MCF 10A (cell line): ENCODE measurements at regions of chr16 and their contacts with region 1.

Region 1: DNA sequence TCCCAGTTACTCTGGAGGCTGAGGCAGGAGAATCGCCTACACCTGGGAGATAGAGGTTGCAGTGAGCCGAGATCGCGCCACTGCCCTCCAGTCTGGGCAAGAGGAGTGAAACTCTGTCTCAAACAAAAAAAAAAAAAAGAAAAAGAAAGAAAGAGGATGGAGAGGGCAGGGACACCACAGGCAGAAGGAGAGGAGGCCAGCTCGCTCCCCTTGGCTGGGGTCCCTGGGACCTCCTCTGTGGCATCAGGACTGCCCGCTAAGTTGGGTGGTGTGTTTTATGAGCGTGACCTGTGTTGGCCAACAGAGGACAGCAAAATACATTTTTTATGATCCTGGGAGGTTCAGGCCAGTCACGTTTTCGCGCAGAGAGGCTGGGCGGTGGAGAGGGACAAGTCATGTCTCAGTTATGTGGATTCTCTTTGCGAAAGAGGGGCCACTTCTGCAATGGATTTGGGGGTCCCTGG is 229.6 kb downstream of the MRTFB start:
- DNase-seq: peak; percentile 85
- H3K4me3 Mint-ChIP-seq: peak overlapping the region; percentile 81
- H3K27ac Mint-ChIP-seq: peak overlapping the region; percentile 71
- H3K4me1 Mint-ChIP-seq: peaks cover 22% of the 10 kb centered on the region
- H3K27me3 Mint-ChIP-seq: no peaks in the 10 kb centered on the region
- CTCF ChIP-seq: peak; percentile 76

Region 2: DNA sequence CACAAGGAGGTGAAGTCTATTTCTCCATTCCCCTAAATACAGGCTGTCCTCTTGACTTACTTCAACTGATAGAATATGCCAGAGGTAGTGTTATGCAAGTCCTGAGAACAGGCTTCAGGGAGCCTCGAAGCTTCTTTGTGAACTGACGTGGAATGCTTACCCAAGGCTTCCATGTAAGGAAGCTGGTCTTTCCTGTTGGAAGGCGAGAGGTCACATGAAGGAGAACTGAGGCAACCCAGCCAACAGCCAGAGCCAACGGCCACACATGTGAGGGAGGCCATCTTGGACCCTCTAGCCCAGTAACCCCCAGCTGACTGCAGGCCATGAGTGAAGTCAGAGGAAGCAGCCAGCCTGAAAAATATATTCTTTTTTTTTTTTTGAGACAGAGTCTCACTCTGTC is 38.3 kb after region 1 on chr16:
- CTCF ChIA-PET with region 1: no interaction called
- POLR2A ChIA-PET with region 1: no interaction called
- intact Hi-C with region 1: no loop called
- DNase-seq: no peak
- H3K4me3 Mint-ChIP-seq: no peak overlapping the region
- H3K27ac Mint-ChIP-seq: no peak overlapping the region
- H3K4me1 Mint-ChIP-seq: no peaks in the 10 kb centered on the region
- H3K27me3 Mint-ChIP-seq: no peaks in the 10 kb centered on the region
- CTCF ChIP-seq: no peak

Region 3: GRCh38 chr16:14364386-14365204 is 63.9 kb after region 1 on chr16:
- CTCF ChIA-PET with region 1: interaction called, 3 read pairs
- POLR2A ChIA-PET with region 1: no interaction called
- intact Hi-C with region 1: loop called (anchors 2 kb)
- DNase-seq: peak; percentile 68
- H3K4me3 Mint-ChIP-seq: peak overlapping the region; percentile 63
- H3K27ac Mint-ChIP-seq: no peak overlapping the region
- H3K4me1 Mint-ChIP-seq: peaks cover 22% of the 10 kb centered on the region
- H3K27me3 Mint-ChIP-seq: no peaks in the 10 kb centered on the region
- CTCF ChIP-seq: no peak

Region 4: GRCh38 chr16:14449790-14450480 is 149.2 kb after region 1 on chr16:
- CTCF ChIA-PET with region 1: interaction called, 13 read pairs
- POLR2A ChIA-PET with region 1: interaction called, 3 read pairs
- intact Hi-C with region 1: no loop called
- DNase-seq: peak; percentile 57
- H3K4me3 Mint-ChIP-seq: no peak overlapping the region
- H3K27ac Mint-ChIP-seq: peak overlapping the region; percentile 56
- H3K4me1 Mint-ChIP-seq: peaks cover 23% of the 10 kb centered on the region
- H3K27me3 Mint-ChIP-seq: no peaks in the 10 kb centered on the region
- CTCF ChIP-seq: no peak

Region 5: GRCh38 chr16:14501331-14502255 is 200.9 kb after region 1 on chr16:
- CTCF ChIA-PET with region 1: interaction called, 22 read pairs
- POLR2A ChIA-PET with region 1: interaction called, 8 read pairs
- intact Hi-C with region 1: no loop called
- DNase-seq: peak; percentile 96
- H3K4me3 Mint-ChIP-seq: peak overlapping the region; percentile 57
- H3K27ac Mint-ChIP-seq: peak overlapping the region; percentile 78
- H3K4me1 Mint-ChIP-seq: peaks cover 56% of the 10 kb centered on the region
- H3K27me3 Mint-ChIP-seq: no peaks in the 10 kb centered on the region
- CTCF ChIP-seq: no peak

Region 6: GRCh38 chr16:14600164-14600563 is 299.4 kb after region 1 on chr16:
- CTCF ChIA-PET with region 1: interaction called, 4 read pairs
- POLR2A ChIA-PET with region 1: no interaction called
- intact Hi-C with region 1: loop called (anchors 1 kb)
- DNase-seq: peak; percentile 27
- H3K4me3 Mint-ChIP-seq: no peak overlapping the region
- H3K27ac Mint-ChIP-seq: no peak overlapping the region
- H3K4me1 Mint-ChIP-seq: no peaks in the 10 kb centered on the region
- H3K27me3 Mint-ChIP-seq: no peaks in the 10 kb centered on the region
- CTCF ChIP-seq: peak; percentile 38